Psoas muscle (tissue), 8 donors: ENCODE measurements at regions of chr19 and their contacts with region 1.

Region 1: DNA sequence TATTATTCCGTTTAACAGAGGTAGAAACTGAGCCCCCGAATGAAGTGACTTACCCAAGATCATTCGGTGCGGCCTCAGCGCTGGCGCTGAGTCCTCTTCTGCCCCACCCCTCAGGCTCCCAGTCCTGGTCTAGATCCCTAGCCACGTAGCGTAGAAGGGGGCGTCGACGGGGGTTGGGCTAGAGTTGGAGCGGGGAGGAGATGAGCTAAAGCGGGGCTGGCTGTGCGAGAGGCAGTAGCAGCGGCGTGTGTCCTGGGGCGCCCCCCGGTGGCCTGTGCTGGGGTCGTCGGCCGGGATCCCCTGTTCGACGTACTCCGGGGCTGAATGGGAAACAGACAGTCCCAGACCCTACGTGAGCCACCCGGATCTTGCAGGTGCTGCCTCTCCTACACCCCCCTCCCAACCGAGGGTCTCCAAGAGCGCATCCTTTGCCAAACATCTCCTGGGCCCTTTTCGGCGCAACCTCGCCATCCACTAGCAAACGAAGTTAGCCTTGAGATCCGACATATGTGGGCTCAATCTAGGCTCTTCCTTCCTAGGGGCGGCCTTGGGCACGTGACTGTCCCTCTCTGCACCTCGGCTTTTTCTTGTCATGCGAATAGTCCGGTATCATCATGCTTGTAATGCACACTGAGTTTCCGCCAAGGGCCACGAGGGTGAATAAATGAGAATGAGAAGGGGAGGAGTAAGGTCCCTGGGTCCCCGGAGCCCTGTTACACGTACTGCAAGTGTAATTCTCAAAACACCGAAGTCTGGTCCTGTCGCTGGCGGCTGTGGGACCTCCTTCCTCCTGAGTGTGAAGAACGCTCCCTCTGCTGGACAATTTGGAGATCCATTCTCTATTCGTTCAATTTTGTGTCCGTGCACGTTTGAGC is 47.7 kb downstream of the CYP4F22 start:
- DNase-seq: peak; percentile 88 to 94
- ATAC-seq: peak; percentile 88 to 94 (median 92)
- H3K4me3 ChIP-seq: peak overlapping the region; percentile 54
- H3K27ac ChIP-seq: no peak overlapping the region
- H3K4me1 ChIP-seq: peaks cover 6% of the 10 kb centered on the region
- H3K27me3 ChIP-seq: peaks cover 0 to 32% (median 9%) of the 10 kb centered on the region in 3 donors
- CTCF ChIP-seq: peak; percentile 88

Region 2: DNA sequence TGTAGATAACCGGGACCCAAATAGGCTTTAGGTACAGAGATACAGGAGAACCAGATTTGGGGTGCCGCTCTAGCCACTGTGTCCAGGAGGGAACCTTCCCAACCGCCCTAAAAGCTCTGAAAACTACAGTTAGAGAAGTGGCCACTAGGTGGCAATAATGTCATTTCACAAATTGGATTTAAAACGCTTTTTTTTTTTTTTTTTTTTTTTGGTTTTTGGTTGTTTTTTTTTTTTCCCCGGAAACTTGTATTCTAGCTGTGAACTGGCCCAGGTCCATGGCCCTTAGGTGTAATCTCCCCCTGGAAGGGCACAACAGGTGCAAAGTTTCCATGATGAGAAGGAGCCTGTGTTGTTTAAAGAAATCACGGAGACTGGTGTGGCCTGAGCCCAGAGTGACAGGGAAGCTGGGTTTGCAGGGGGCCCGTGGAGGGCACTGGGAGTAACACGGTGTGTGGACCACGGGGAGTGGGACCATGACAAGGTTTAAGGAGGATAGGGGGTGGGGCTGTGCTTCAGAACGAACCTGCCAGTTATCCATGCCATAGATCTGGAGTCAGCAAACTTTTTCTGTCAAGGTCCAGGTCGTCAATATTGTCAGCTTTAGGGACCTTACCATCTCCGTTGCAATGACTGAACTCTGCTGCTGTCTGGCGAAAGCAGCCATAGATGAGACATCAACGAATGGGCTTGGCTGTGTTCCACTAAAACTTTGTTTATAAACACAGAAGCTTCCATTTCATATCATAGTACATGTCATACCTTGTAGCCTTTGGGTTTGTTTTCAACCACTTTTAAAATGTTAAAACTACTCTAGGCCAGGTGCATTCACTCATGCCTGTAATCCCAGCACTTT is 463.9 kb before region 1 on chr19:
- intact Hi-C with region 1: loop called (anchors 2 to 5 kb)
- DNase-seq: no peak
- ATAC-seq: peak in 1 of 4 donors; percentile 60
- H3K4me3 ChIP-seq: no peak overlapping the region
- H3K27ac ChIP-seq: no peak overlapping the region
- H3K4me1 ChIP-seq: no peaks in the 10 kb centered on the region
- H3K27me3 ChIP-seq: peaks cover 0 to 5% (median 0%) of the 10 kb centered on the region in 3 donors
- CTCF ChIP-seq: peak; percentile 72

Region 3: GRCh38 chr19:15177269-15178116 is 378.5 kb before region 1 on chr19:
- intact Hi-C with region 1: loop called (anchors 1 to 2 kb)
- DNase-seq: peak; percentile 79 to 90
- ATAC-seq: peak; percentile 86 to 97 (median 94)
- H3K4me3 ChIP-seq: peak overlapping the region; percentile 39
- H3K27ac ChIP-seq: no peak overlapping the region
- H3K4me1 ChIP-seq: peaks cover 3% of the 10 kb centered on the region
- H3K27me3 ChIP-seq: peaks cover 0 to 18% (median 5%) of the 10 kb centered on the region in 3 donors
- CTCF ChIP-seq: peak; percentile 100

Region 4: GRCh38 chr19:15264061-15264932 is 291.7 kb before region 1 on chr19:
- intact Hi-C with region 1: loop called (anchors 1 to 5 kb)
- DNase-seq: peak; percentile 79 to 88
- ATAC-seq: peak; percentile 34 to 59 (median 40)
- H3K4me3 ChIP-seq: no peak overlapping the region
- H3K27ac ChIP-seq: peak overlapping the region; percentile 78
- H3K4me1 ChIP-seq: peaks cover 51% of the 10 kb centered on the region
- H3K27me3 ChIP-seq: no peaks in the 10 kb centered on the region
- CTCF ChIP-seq: peak; percentile 67

Region 5: DNA sequence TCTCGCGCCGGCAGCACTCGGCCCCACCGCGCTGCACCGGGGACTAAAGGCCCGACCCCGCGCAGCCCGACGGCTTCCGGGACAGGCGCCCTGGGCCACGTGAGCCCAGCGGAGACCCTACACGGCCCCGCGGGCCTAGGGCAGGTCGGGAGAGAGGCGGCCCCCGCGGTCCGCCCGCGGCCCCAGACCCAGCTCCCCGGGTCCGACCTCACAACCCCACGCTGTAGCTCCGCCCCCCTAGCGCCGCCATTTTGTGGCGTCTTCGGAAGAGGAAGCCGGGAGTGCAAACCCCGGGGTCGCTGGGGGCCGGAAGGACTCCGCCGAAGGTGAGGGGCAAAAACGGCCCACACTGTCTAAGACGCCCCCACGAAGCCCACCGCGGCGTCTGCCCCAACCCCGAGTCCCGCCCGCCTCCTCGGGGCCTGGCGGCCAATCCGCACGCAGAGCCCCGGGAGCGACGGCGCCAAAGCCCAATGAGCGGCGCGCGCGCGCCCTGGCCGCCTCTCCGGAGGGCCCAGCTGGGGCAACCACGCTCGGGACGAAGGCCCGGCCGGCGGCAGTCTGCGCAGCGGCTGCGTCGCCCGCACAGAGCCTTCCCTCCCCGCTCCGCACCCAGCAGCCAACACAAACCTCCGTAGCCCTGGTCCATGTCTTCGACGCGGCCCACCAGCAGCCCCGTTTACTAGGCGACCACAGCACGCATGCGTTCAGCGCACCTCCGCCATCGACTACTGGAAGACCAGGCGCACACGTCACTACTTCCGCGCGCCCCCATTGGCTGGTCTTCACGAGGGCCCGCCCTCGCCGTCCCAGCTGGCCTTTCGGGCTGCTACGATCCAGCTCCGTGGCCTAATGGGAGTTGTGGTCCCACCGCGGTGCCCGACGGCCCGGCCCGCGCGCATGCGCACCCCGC is 176.7 kb before region 1 on chr19 and contains the start of gene AKAP8:
- intact Hi-C with region 1: loop called in 1 of 2 experiments (anchors 5 kb)
- DNase-seq: peak; percentile 98 to 99
- ATAC-seq: peak; percentile 86 to 94 (median 90)
- H3K4me3 ChIP-seq: peak within 1 kb of the TSS; percentile 78
- H3K27ac ChIP-seq: peak within 1 kb of the TSS; percentile 93
- H3K4me1 ChIP-seq: peaks cover 44% of the 10 kb centered on the region
- H3K27me3 ChIP-seq: no peaks in the 10 kb centered on the region
- CTCF ChIP-seq: no peak
- total RNA-seq, gene AKAP8: 18.9 to 42.8 (median 27.8) TPM

Region 6: DNA sequence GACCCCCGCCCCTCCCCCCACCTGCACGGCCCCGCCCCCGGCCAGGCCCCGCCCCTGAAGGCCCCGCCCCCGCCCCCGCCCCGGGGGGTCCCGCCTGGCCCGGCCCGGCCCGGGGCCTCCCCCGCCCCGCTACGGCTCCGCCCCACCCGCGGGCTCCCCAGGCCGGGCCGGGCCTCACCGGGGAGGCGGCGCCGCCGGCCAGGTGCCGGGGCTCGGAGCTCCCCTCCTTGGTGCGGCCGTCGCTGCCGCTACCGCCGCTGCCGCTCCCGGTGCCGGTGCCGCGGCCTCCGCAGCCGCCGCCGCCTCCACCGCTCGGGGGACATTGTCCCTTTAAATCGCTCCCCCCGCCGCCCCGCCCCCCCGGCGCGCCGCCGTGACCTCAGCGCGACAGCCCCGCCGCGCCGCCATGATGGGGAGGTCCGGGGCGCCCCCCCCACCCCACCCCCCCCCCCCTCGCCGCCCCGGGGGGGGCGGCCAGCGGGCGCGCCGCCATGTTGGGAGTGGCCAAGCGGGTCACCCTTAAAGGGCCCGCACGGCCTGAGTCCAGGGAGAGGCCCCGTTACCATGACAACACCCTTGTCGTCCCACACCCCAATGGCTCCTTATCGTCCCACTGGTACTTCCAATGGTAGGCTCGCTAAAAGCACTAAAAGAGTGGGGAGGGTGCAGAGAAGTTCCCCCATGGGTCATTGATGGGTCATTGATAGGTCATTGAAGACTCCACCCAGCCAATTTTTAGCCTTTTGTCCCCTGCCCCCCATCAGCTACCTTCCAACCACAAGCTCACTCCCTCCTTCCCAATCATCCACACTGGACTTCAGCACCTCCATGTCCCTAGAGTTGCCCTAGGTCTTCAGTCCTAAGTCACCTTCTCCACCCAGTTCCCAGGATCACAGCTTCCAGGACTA is 106.1 kb before region 1 on chr19 and contains the start of gene WIZ:
- intact Hi-C with region 1: loop called (anchors 5 to 10 kb)
- DNase-seq: peak; percentile 91 to 94
- ATAC-seq: peak; percentile 16 to 42 (median 18)
- H3K4me3 ChIP-seq: peak within 1 kb of the TSS; percentile 78
- H3K27ac ChIP-seq: peak within 1 kb of the TSS; percentile 78
- H3K4me1 ChIP-seq: peaks cover 27% of the 10 kb centered on the region
- H3K27me3 ChIP-seq: peaks cover 0 to under 1% (median 0%) of the 10 kb centered on the region in 3 donors
- CTCF ChIP-seq: no peak
- total RNA-seq, gene WIZ: 16.6 to 39.1 (median 25.8) TPM